ENCODE measurements at regions of chr1 and their contacts with region 1.

Region 1: GRCh38 chr1:99268021-99268420 is 3.7 kb downstream of the PLPPR4 start:
- DNase-seq: no peak
- ATAC-seq: no peak
- H3K4me3 ChIP-seq: no peak overlapping the region
- H3K4me3 Mint-ChIP-seq: no peak overlapping the region
- H3K27ac ChIP-seq: no peak overlapping the region
- H3K27ac Mint-ChIP-seq: no peak overlapping the region
- H3K4me1 ChIP-seq: no peaks in the 10 kb centered on the region
- H3K4me1 Mint-ChIP-seq: peaks cover 6% of the 10 kb centered on the region
- H3K27me3 ChIP-seq: no peaks in the 10 kb centered on the region
- H3K27me3 Mint-ChIP-seq: peaks cover 35% of the 10 kb centered on the region
- CTCF ChIP-seq: no peak

Region 2: GRCh38 chr1:99207216-99207615 is 60.8 kb before region 1 on chr1:
- CTCF ChIA-PET with region 1: no interaction called
- POLR2A ChIA-PET with region 1: no interaction called
- intact Hi-C with region 1: no loop called
- DNase-seq: no peak
- ATAC-seq: no peak
- H3K4me3 ChIP-seq: no peak overlapping the region
- H3K4me3 Mint-ChIP-seq: no peak overlapping the region
- H3K27ac ChIP-seq: no peak overlapping the region
- H3K27ac Mint-ChIP-seq: no peak overlapping the region
- H3K4me1 ChIP-seq: no peaks in the 10 kb centered on the region
- H3K4me1 Mint-ChIP-seq: no peaks in the 10 kb centered on the region
- H3K27me3 ChIP-seq: peaks cover 0 to 2% of the 10 kb centered on the region in 2 experiments
- H3K27me3 Mint-ChIP-seq: peaks cover 4% of the 10 kb centered on the region
- CTCF ChIP-seq: no peak

Region 3: GRCh38 chr1:99228153-99228552 is 39.9 kb before region 1 on chr1:
- CTCF ChIA-PET with region 1: no interaction called
- POLR2A ChIA-PET with region 1: no interaction called
- intact Hi-C with region 1: loop called in 1 of 2 experiments (anchors 1 kb)
- DNase-seq: no peak
- ATAC-seq: no peak
- H3K4me3 ChIP-seq: no peak overlapping the region
- H3K4me3 Mint-ChIP-seq: no peak overlapping the region
- H3K27ac ChIP-seq: no peak overlapping the region
- H3K27ac Mint-ChIP-seq: no peak overlapping the region
- H3K4me1 ChIP-seq: no peaks in the 10 kb centered on the region
- H3K4me1 Mint-ChIP-seq: no peaks in the 10 kb centered on the region
- H3K27me3 ChIP-seq: no peaks in the 10 kb centered on the region
- H3K27me3 Mint-ChIP-seq: peaks cover 8% of the 10 kb centered on the region
- CTCF ChIP-seq: no peak

Region 4: DNA sequence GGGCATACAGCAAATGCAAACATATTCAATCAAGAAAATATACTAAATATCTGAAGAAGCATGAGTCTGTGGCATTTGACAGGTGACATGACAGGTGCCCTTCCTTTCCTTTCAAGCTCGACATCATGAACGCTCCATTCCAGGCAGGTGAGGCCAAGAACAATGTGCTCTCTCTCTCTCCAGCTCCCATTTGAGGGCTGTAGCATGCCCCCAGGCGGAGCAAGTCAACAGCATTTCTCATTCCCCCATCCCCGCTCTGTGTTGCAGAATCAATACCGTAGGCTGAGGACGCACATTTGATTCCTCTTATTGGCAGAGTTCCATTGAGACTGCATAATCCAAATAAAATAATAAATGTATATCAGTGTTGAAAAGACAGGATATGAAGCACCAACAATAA is 28.3 kb before region 1 on chr1:
- CTCF ChIA-PET with region 1: no interaction called
- POLR2A ChIA-PET with region 1: no interaction called
- intact Hi-C with region 1: no loop called
- DNase-seq: no peak
- ATAC-seq: no peak
- H3K4me3 ChIP-seq: no peak overlapping the region
- H3K4me3 Mint-ChIP-seq: no peak overlapping the region
- H3K27ac ChIP-seq: no peak overlapping the region
- H3K27ac Mint-ChIP-seq: no peak overlapping the region
- H3K4me1 ChIP-seq: no peaks in the 10 kb centered on the region
- H3K4me1 Mint-ChIP-seq: no peaks in the 10 kb centered on the region
- H3K27me3 ChIP-seq: no peaks in the 10 kb centered on the region
- H3K27me3 Mint-ChIP-seq: peaks cover 2% of the 10 kb centered on the region
- CTCF ChIP-seq: no peak

Measured in CD8-positive, alpha-beta T cell (primary cell).